MCF 10A (cell line): ENCODE measurements at regions of chr6 and their contacts with region 1.

Region 1: GRCh38 chr6:43391440-43392031 is 22.1 kb upstream of the ZNF318 start:
- DNase-seq: no peak
- H3K4me3 Mint-ChIP-seq: no peak overlapping the region
- H3K27ac Mint-ChIP-seq: no peak overlapping the region
- H3K4me1 Mint-ChIP-seq: no peaks in the 10 kb centered on the region
- H3K27me3 Mint-ChIP-seq: no peaks in the 10 kb centered on the region
- CTCF ChIP-seq: no peak

Region 2: DNA sequence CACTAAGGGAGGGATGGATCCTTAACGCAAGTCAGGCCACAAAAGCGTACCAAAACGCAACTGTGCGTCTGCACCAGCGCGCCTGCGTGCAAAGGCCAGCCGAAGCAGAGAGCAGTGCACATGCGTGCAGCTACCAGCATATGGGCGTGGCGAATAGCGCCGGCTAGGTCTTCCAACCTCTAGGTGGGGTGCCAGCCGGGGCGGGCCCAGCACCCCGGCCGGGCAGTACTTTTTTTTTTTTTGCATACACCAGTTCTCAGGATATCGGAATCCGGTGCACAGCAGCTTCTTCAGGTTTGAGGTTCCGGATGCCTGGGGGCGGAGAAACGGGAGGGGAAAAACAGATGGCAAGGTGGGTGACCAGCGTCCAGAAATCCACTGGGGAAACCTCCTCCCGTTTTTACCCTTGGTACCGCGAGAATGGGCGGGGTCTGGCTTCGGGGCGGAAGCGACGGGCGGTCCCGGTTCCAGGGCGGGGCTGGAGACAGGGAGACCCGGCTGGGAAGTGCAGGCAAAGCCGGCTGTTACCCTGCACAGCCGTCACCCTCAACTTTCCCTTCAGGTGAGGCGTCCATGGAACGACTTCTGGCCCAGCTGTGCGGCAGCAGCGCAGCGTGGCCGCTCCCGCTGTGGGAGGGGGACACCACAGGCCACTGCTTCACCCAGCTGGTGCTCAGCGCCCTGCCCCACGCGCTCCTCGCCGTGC is 36.0 kb after region 1 on chr6 and contains the start of gene ABCC10:
- CTCF ChIA-PET with region 1: interaction called, 3 read pairs
- POLR2A ChIA-PET with region 1: interaction called, 10 read pairs
- intact Hi-C with region 1: no loop called
- DNase-seq: peak; percentile 95
- H3K4me3 Mint-ChIP-seq: peak within 1 kb of the TSS; percentile 87
- H3K27ac Mint-ChIP-seq: peak within 1 kb of the TSS; percentile 63
- H3K4me1 Mint-ChIP-seq: peaks cover 10% of the 10 kb centered on the region
- H3K27me3 Mint-ChIP-seq: no peaks in the 10 kb centered on the region
- CTCF ChIP-seq: no peak
- total RNA-seq, gene ABCC10: 25.6 and 25.9 TPM in 2 replicates

Region 3: DNA sequence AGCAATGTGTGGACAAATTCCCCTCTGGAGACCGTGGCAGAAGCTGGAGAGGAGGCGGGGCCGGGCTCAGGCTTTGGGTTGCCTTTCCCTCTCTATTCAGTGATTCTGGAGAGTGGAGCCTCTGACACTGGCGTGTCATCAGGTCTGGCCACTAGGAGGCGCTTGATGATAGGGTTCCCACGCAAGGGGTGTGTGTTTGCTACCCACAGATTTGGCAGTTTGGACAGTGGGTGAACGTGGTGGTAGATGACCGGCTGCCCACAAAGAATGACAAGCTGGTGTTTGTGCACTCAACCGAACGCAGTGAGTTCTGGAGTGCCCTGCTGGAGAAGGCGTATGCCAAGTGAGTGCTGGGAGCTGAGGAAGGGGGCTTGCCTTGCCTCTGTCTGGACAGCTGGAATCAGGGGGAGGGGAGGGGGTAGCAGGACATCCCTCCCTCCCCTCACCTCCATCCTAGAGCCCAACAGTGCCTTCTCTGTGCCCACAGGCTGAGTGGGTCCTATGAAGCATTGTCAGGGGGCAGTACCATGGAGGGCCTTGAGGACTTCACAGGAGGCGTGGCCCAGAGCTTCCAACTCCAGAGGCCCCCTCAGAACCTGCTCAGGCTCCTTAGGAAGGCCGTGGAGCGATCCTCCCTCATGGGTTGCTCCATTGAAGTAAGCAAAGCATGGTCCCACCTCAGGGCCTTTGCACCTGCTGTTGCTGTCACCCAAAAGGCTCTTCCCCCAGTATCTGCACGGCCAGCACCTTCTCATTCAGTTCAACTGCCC is 781.4 kb after region 1 on chr6:
- CTCF ChIA-PET with region 1: no interaction called
- POLR2A ChIA-PET with region 1: no interaction called
- intact Hi-C with region 1: no loop called
- DNase-seq: peak; percentile 84
- H3K4me3 Mint-ChIP-seq: no peak overlapping the region
- H3K27ac Mint-ChIP-seq: no peak overlapping the region
- H3K4me1 Mint-ChIP-seq: peaks cover 16% of the 10 kb centered on the region
- H3K27me3 Mint-ChIP-seq: no peaks in the 10 kb centered on the region
- CTCF ChIP-seq: peak; percentile 85